Activated CD4-positive, alpha-beta memory T cell treated with anti-CD3 and anti-CD28 coated beads for 36 hours (primary cell): ENCODE measurements at regions of chr9 and their contacts with region 1.

Region 1: GRCh38 chr9:133184962-133185361 is 21.2 kb upstream of the GBGT1 start:
- DNase-seq: peak; percentile 71
- H3K4me3 Mint-ChIP-seq: no peak overlapping the region
- H3K27ac Mint-ChIP-seq: no peak overlapping the region
- H3K4me1 Mint-ChIP-seq: peaks cover 20% of the 10 kb centered on the region
- H3K27me3 Mint-ChIP-seq: peaks cover 21% of the 10 kb centered on the region

Region 2: GRCh38 chr9:133199648-133200321 is 14.8 kb after region 1 on chr9:
- CTCF ChIA-PET with region 1: interaction called, 16 read pairs
- POLR2A ChIA-PET with region 1: no interaction called
- intact Hi-C with region 1: no loop called
- DNase-seq: peak; percentile 56
- H3K4me3 Mint-ChIP-seq: peak overlapping the region; percentile 63
- H3K27ac Mint-ChIP-seq: no peak overlapping the region
- H3K4me1 Mint-ChIP-seq: peaks cover 2% of the 10 kb centered on the region
- H3K27me3 Mint-ChIP-seq: peaks cover 18% of the 10 kb centered on the region

Region 3: DNA sequence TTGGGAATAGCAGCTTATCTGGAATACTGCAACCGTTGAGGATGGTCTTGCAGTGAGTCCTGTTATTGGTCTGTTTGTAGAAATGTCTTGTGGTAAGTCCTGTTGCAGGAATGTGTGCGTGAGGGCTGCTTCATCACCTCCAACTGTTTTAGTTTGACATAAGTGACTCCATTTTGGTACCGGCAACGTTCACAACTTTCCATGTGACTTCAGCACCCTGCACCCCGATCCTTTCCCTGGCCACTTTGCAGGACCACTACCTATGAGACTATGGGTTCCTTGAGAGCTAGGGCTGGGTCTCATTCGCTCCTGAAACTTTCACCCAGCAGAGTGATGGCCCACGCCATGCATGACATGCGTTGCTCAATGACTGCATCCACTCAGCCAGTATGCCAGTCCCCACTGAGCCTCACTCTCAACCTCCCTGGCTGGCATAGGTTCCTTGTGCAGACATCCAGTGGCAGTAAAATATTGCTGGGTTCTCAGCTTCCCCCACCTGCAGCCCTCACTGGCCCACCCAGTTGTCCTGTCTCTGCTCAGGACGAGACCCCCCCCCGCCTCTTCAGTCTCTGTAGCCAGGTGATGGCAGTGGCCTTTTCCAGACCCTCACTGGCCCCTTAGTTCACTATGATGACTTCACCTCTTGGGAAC is 143.0 kb after region 1 on chr9:
- CTCF ChIA-PET with region 1: interaction called, 17 read pairs
- POLR2A ChIA-PET with region 1: interaction called, 4 read pairs
- intact Hi-C with region 1: no loop called
- DNase-seq: no peak
- H3K4me3 Mint-ChIP-seq: no peak overlapping the region
- H3K27ac Mint-ChIP-seq: no peak overlapping the region
- H3K4me1 Mint-ChIP-seq: peaks cover 7% of the 10 kb centered on the region
- H3K27me3 Mint-ChIP-seq: no peaks in the 10 kb centered on the region

Region 4: GRCh38 chr9:133406480-133407307 is 221.7 kb after region 1 on chr9:
- CTCF ChIA-PET with region 1: interaction called, 4 read pairs
- POLR2A ChIA-PET with region 1: no interaction called
- intact Hi-C with region 1: loop called (anchors 10 kb)
- DNase-seq: peak; percentile 92
- H3K4me3 Mint-ChIP-seq: no peak overlapping the region
- H3K27ac Mint-ChIP-seq: peak overlapping the region; percentile 83
- H3K4me1 Mint-ChIP-seq: peaks cover 14% of the 10 kb centered on the region
- H3K27me3 Mint-ChIP-seq: no peaks in the 10 kb centered on the region